Activated CD4-positive, alpha-beta T cell treated with anti-CD3 and anti-CD28 coated beads, Interleukin-2, amount 10 ng/mL, durations not matched to agents 24 days and 14 days (primary cell): ENCODE measurements at regions of chr3 and their contacts with region 1.

Region 1: DNA sequence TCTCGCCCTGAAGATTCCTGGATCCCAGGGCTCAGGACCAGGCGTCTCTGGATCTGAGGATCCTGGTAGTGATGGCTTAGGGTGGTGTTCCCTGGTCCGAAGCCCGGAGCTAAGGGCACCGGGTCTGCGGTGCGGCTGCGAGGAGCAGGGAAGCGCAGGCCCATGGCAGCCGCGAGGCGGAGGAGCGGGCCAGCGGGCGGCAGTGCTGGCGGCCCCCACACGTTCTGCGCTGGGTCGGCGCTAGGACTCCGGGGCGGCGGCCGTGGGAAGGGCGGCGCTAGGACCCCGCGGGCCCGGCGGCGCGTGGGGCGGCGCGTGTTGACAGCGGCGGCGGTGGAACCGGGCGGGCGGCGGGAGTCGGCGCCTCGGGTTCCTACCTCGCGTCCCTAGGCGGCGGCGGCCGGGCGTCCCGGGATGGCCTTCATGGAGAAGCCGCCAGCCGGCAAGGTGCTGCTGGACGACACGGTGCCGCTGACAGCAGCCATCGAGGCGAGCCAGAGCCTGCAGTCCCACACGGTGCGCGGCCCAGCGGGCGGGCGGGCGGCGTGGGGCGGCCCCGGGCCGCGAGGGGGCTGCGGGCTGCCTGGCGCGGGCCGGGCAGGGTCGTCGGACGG is at the start of gene PXK:
- DNase-seq: peak; percentile 96
- H3K4me3 Mint-ChIP-seq: peak within 1 kb of the TSS; percentile 99
- H3K27ac Mint-ChIP-seq: peak within 1 kb of the TSS; percentile 99
- H3K4me1 Mint-ChIP-seq: peaks cover 39% of the 10 kb centered on the region
- H3K27me3 Mint-ChIP-seq: no peaks in the 10 kb centered on the region
- total RNA-seq, gene PXK: 41.1 and 45.7 TPM in 2 replicates

Region 2: GRCh38 chr3:57158813-57159738 is 1173.6 kb before region 1 on chr3:
- intact Hi-C with region 1: no loop called
- DNase-seq: no peak
- H3K4me3 Mint-ChIP-seq: no peak overlapping the region
- H3K27ac Mint-ChIP-seq: no peak overlapping the region
- H3K4me1 Mint-ChIP-seq: peaks cover 11% of the 10 kb centered on the region
- H3K27me3 Mint-ChIP-seq: peaks cover 56% of the 10 kb centered on the region

Region 3: GRCh38 chr3:58222094-58222724 is 110.5 kb before region 1 on chr3:
- intact Hi-C with region 1: no loop called
- DNase-seq: no peak
- H3K4me3 Mint-ChIP-seq: no peak overlapping the region
- H3K27ac Mint-ChIP-seq: no peak overlapping the region
- H3K4me1 Mint-ChIP-seq: no peaks in the 10 kb centered on the region
- H3K27me3 Mint-ChIP-seq: peaks cover 14% of the 10 kb centered on the region

Region 4: DNA sequence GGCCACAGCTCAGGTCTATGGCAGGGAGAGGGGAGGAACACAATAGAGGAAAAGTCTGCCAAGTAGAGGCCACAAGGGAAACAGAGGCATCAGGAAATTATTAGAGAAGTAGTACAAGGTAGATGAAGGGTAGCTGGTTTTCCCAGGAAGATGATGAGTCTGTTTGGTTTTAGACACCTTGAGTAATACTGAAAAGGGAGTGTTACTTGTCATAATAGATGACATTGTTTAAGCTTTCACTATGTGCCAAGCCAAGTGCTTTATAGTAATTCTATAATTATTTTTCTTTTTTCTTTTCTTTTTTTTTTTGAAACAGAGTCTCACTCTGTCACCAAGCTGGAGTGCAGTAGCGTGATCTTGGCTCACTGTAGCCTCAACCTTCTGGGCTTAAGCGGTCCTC is 13.7 kb after region 1 on chr3:
- intact Hi-C with region 1: loop called (anchors 1 kb)
- DNase-seq: no peak
- H3K4me3 Mint-ChIP-seq: peak overlapping the region; percentile 8
- H3K27ac Mint-ChIP-seq: peak overlapping the region; percentile 68
- H3K4me1 Mint-ChIP-seq: peaks cover 51% of the 10 kb centered on the region
- H3K27me3 Mint-ChIP-seq: no peaks in the 10 kb centered on the region

Region 5: DNA sequence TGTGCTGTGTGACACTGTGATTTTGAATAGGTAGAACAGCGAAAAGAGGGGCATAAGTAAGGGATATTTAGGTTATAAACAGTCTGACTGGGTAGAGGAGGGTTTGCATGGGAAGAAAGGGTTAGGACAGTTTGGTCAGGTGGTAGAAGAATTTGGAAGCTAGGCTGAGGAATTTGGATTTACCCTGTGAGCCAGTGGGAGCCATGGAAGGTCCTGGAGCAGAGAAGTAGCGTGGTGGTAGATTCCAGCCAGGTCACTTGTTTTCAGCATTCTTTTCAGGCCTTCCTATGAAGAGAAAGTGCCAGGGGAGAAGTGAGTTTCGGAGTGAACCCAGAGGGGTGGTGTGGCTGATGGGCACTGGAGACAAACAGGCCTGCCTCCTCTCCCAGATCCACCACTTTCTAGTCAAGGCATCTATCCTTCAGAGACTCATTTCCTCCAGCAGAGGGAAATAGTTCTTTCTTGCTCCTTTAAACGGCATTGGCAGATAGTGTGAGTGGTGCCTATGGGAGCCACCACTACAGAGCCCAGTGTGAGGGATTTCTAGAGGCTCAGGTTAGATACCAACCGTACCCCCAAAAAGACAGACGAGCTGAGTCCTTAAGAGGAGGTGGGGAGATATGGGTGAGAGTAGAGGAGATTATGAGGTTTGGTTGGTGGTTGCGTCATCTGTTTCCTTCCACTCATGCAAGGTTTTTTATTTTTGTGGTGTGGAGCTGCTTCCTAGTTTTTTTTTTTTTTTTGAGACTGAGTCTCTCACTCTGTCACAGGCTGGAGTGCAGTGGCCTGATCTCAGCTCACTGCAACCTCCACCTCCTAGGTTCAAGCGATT is 21.3 kb after region 1 on chr3:
- intact Hi-C with region 1: loop called (anchors 1 kb)
- DNase-seq: peak; percentile 87
- H3K4me3 Mint-ChIP-seq: peak overlapping the region; percentile 82
- H3K27ac Mint-ChIP-seq: peak overlapping the region; percentile 92
- H3K4me1 Mint-ChIP-seq: peaks cover 83% of the 10 kb centered on the region
- H3K27me3 Mint-ChIP-seq: no peaks in the 10 kb centered on the region

Region 6: DNA sequence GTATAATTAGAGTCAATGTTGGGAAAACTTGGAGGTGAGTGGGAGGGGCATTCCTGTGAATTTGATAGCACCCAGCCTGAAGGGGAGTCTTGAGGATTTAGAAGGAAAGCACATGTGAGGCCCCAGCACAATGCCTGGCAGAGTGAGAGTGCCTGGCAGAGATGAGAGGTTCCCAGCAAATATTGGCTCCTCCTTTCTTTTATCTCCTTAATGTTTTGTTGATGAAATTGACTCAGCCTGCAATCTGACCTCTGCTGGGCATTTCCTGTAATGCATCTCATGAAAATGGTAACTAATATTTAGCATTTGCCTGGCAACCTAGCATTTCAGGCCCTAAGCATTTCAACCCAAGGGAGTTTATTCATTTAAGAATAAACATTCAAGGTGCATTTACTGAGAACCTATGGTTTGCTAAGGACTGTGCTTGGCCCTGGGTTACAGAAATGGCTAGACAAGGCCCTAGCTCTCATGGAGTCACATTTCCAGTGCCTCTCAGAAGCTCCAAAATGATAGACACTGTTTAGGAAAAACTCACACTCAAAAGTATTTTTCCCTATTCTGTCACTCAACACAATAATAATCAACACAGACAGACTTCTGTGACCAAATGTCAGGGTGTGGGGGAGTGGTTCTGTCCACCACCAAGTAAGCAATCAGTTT is 82.0 kb after region 1 on chr3:
- intact Hi-C with region 1: loop called (anchors 1 kb)
- DNase-seq: peak; percentile 89
- H3K4me3 Mint-ChIP-seq: no peak overlapping the region
- H3K27ac Mint-ChIP-seq: no peak overlapping the region
- H3K4me1 Mint-ChIP-seq: peaks cover 5% of the 10 kb centered on the region
- H3K27me3 Mint-ChIP-seq: no peaks in the 10 kb centered on the region